HAP-1 (cell line): ENCODE measurements at regions of chr10 and their contacts with region 1.

Region 1: DNA sequence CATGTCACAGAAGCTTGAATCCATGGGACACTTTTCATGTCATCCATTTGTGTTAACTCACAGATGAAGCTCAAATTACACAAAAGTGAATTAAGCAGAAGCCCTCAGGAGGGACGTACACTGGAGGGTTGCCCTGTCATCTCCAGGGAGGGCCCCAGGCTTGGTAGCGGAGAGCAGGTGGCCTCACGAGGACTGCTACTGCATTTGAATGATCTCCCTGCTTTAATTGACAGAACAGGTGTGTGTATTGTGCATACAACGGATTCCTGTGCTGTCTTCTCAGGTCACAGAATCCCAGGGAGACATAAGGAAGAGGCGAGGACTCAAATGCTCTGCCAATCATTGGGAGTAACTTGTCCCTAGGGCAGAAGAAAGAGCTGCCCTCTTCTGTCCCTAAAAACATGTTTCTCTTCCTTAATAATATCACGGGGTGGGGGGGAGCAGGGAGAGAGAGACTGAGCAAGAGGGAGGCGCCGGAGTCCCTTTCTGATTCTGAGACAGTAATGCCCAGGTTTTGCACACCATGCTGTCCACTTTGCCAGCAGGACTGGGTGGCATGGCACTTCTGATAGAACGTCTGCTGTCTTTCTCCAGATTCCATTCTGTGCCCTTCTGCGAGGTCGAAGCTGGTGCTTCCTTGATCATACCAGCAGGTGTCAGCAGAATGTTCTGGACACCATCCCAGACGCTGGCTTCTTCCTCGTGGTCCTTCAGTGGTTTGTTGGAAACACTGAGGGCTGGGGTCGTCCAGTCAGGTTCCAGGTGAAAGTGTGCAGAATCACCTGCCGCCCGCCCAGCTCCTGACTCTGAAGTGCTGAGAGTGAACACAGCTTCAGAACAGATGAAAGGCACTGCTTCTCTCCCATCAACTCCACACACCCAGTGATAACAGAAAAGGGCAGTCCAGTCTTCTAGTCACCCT is 26.2 kb upstream of the RASGEF1A start:
- DNase-seq: peak; percentile 74 to 77
- H3K4me3 ChIP-seq: no peak overlapping the region
- H3K4me1 ChIP-seq: peaks cover 8% of the 10 kb centered on the region; the same call in 1 of the 2 replicates
- H3K27me3 ChIP-seq: no peaks in the 10 kb centered on the region

Region 2: DNA sequence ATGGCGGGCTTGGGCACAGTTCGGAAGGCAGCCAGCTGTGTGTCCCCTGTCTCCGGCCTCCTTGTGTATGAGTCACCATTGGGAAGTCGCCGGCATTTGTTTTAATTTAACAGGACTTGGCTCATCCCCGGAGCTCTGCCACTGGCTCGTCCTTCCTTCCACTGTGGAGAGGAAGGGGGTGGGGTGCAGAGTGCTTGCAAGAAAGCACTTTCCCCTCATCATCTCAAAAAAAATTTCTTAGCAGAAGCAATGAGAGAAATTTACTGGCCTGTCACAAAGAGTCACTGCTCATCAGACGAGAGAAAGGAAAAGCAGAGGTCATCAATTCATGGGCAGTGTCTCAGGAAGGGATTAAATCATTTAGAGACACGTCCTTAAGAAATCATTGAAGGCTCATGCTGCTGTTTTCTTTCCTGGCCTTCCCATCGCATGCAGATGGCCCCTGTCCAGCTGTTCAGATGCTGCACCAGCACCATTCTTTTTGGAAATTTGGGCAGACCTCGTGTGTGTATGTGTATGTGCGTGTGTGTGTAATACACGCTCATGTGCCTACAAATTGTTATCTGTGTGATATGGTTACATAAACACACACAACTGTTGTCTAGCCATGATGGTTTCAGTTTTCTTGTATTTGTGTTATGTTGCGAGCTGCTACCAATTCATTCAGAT is 417.1 kb before region 1 on chr10:
- in situ Hi-C with region 1: no loop called
- DNase-seq: no peak
- H3K4me3 ChIP-seq: no peak overlapping the region
- H3K4me1 ChIP-seq: no peaks in the 10 kb centered on the region
- H3K27me3 ChIP-seq: no peaks in the 10 kb centered on the region

Region 3: GRCh38 chr10:43340619-43341018 is 47.6 kb after region 1 on chr10:
- in situ Hi-C with region 1: loop called (anchors 5 kb)
- DNase-seq: no peak
- H3K4me3 ChIP-seq: no peak overlapping the region
- H3K4me1 ChIP-seq: peaks cover 31% of the 10 kb centered on the region
- H3K27me3 ChIP-seq: no peaks in the 10 kb centered on the region

Region 4: DNA sequence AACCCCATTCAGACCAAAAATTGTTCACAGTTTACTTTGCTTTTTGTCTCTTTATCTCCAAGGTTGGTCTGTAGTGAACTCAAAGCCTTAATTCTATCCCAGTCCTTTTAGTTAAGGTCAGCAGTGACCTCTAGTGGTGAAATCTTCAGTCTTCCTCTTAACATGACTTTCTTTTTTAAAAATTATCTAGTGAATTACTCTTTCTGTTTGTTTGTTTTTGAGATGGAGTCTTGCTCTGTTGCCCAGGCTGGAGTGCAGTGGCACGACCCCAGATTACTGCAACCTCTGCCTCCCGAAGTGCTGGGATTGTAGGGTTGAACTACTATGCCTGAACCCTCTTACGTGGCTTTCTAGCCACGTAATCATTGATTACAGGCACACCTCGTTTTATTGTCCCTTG is 168.9 kb after region 1 on chr10:
- in situ Hi-C with region 1: loop called (anchors 5 kb)
- DNase-seq: peak; percentile 57 to 83
- H3K4me3 ChIP-seq: no peak overlapping the region
- H3K4me1 ChIP-seq: peaks cover 3% of the 10 kb centered on the region; the same call in 1 of the 2 replicates
- H3K27me3 ChIP-seq: no peaks in the 10 kb centered on the region

Region 5: GRCh38 chr10:43863859-43864591 is 571.0 kb after region 1 on chr10:
- in situ Hi-C with region 1: no loop called
- DNase-seq: no peak
- H3K4me3 ChIP-seq: no peak overlapping the region
- H3K4me1 ChIP-seq: no peaks in the 10 kb centered on the region
- H3K27me3 ChIP-seq: no peaks in the 10 kb centered on the region